ENCODE measurements at regions of chr12 and their contacts with region 1.

Region 1: DNA sequence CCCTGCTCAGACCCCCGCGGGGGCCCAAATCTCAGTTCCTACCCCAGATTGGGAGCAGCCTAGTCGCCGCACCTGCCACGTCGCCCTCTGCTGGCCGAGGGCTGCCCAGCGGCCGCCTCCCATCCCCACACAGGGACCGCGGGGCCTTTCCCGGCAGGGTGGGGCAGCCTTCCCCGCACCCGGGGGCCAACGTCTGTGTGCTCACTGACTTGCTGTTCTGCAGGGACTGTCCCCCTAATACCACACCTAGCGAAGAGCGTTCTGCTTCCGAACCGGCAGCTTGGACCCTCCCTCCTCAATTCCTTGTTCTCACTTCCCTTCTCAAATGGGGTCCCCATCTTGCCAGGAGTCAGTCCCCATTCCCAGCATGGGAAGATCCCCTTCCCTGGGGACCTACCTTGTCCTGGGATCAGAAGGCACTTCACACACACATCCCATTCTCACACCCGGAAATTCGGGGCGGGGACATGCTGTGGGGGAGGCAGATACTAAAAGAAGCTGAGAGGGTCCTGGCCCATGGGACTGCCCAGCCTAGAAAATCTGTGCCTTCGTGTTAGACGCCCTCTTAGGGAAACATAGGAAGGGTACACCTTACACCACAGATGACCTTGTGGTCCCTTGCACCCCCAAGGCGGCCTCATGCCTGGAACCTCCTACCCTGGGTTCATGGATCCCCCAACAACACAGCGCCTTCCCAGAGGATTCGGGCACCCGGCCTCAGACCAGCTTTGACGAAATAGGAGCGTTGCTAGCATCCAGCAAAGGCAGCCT is 16.4 kb downstream of the ACVRL1 start:
- DNase-seq: peak; percentile 70
- H3K4me3 Mint-ChIP-seq: peak overlapping the region; percentile 14
- H3K27ac Mint-ChIP-seq: no peak overlapping the region
- H3K4me1 Mint-ChIP-seq: peaks cover 17% of the 10 kb centered on the region
- H3K27me3 Mint-ChIP-seq: no peaks in the 10 kb centered on the region

Region 2: GRCh38 chr12:51891843-51892242 is 31.8 kb before region 1 on chr12:
- CTCF ChIA-PET with region 1: interaction called, 8 read pairs
- intact Hi-C with region 1: loop called (anchors 1 kb)
- DNase-seq: no peak
- H3K4me3 Mint-ChIP-seq: no peak overlapping the region
- H3K27ac Mint-ChIP-seq: no peak overlapping the region
- H3K4me1 Mint-ChIP-seq: no peaks in the 10 kb centered on the region
- H3K27me3 Mint-ChIP-seq: no peaks in the 10 kb centered on the region

Region 3: DNA sequence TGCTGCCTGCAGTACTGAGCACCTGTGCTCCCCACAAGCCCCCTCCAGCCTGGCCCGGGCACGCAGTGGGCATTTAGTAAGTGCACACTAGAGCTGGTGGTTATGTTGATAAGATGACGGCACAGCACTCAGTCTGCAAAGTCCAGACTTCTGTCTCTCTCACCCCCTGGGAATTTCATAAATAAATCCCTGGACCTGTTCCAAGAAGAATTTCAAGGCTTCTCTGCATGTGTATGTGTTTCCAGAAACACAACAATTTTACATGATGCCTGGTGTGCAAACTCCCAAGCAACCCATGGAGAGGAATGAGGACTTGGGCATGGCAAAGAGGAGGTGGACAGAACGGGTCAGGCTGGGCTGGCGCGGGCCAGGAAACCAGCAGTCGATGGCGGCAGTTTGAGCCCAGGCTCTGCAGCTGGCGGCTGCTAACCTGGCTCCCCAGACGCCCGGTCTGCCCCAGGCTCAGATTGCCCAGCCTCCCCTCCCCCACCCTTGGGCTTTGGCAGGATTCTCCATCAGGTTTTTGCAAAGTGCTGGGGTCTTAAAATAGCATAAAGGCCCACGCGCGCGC is 17.4 kb after region 1 on chr12:
- CTCF ChIA-PET with region 1: interaction called, 12 read pairs
- intact Hi-C with region 1: no loop called
- DNase-seq: no peak
- H3K4me3 Mint-ChIP-seq: no peak overlapping the region
- H3K27ac Mint-ChIP-seq: no peak overlapping the region
- H3K4me1 Mint-ChIP-seq: peaks cover 4% of the 10 kb centered on the region
- H3K27me3 Mint-ChIP-seq: no peaks in the 10 kb centered on the region

Region 4: GRCh38 chr12:51951199-51951842 is 27.6 kb after region 1 on chr12 and contains the start of gene ACVR1B:
- CTCF ChIA-PET with region 1: interaction called, 7 read pairs
- intact Hi-C with region 1: loop called (anchors 2 kb)
- DNase-seq: peak; percentile 91
- H3K4me3 Mint-ChIP-seq: peak within 1 kb of the TSS; percentile 93
- H3K27ac Mint-ChIP-seq: peak within 1 kb of the TSS; percentile 54
- H3K4me1 Mint-ChIP-seq: peaks cover 41% of the 10 kb centered on the region
- H3K27me3 Mint-ChIP-seq: peaks cover 4% of the 10 kb centered on the region
- total RNA-seq, gene ACVR1B: 8.7 to 9.1 TPM

Region 5: DNA sequence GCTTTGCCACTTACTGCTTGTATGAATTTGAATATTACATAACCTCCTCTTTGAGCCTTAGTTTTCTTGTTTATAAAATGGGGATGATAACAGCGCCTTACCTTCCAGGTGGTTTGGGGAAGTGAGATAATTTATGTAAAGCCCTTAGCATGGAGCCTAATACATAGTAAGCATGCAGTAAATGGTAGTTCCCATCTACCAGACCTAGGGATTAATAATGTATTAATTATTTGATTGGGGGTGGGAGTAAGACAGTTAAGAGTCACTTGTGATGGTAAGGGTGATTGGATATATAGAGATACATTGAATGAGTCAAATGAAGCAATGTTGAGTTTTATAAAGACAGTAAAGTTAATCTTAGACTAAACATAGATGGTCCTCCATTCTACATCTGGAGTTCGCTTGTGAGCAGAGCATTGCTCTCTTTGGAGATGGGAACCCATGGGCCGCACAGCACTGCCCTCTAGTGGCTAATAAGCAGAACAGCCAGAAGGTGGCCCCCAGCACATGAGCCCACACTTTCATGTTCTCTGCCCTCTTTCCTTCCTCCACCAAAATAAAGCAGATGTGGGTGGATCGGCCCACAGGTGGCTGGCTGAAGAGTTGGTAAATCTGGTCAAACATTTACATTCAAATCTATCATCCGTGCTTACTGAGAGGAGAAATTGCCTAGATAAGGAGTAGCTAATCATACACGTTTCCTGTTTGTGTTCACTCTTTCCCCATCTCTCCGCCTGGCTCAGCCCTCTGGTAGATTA is 56.5 kb after region 1 on chr12:
- CTCF ChIA-PET with region 1: interaction called, 28 read pairs
- intact Hi-C with region 1: loop called (anchors 1 kb)
- DNase-seq: peak; percentile 78
- H3K4me3 Mint-ChIP-seq: no peak overlapping the region
- H3K27ac Mint-ChIP-seq: no peak overlapping the region
- H3K4me1 Mint-ChIP-seq: peaks cover 25% of the 10 kb centered on the region
- H3K27me3 Mint-ChIP-seq: no peaks in the 10 kb centered on the region

Measured in activated naive CD4-positive, alpha-beta T cell treated with anti-CD3 and anti-CD28 coated beads for 36 hours (primary cell).